AG04449 (cell line): ENCODE measurements at regions of chr11 and their contacts with region 1.

Region 1: DNA sequence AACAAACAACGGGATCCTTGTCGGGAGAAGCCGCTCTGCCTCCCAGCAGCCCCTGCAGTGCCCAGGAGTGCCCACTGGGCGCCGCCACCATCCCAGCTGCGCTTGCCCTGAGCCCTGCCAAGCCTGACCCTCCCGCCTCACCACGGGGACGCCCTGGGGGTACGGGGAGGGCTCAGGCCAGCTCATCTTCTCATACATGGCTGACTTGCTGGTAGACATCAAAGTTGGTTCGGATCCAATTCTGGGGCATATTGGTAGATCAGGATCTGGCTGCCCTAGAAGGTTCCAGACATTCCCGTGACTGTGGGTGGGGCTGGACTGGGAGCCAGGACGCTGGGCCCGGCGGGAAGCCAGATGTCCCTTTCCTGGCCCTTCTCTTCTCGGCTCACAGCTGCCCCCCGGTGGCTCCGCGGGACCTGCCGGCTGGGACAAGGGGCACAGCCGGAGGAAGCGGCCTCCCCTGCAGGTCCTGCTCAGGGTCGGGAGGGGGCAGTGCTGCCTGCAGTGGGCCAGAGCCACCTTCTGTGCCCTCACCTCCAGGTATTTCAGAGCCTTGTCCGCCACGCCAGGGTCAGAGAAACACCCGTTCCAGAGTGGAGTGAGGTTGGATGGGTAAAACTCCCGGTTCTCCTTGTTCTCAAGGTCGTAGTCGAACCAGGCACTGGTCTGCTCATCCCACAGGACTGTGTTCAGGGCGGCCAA is 10.6 kb upstream of the TREH start:
- DNase-seq: peak; percentile 38
- H3K4me3 ChIP-seq: peak overlapping the region; percentile 47
- CTCF ChIP-seq: peak; percentile 99

Region 2: GRCh38 chr11:118672846-118673245 is 17.2 kb before region 1 on chr11:
- CTCF ChIA-PET with region 1: interaction called, 47 read pairs
- POLR2A ChIA-PET with region 1: no interaction called
- DNase-seq: no peak
- H3K4me3 ChIP-seq: no peak overlapping the region
- CTCF ChIP-seq: no peak

Region 3: DNA sequence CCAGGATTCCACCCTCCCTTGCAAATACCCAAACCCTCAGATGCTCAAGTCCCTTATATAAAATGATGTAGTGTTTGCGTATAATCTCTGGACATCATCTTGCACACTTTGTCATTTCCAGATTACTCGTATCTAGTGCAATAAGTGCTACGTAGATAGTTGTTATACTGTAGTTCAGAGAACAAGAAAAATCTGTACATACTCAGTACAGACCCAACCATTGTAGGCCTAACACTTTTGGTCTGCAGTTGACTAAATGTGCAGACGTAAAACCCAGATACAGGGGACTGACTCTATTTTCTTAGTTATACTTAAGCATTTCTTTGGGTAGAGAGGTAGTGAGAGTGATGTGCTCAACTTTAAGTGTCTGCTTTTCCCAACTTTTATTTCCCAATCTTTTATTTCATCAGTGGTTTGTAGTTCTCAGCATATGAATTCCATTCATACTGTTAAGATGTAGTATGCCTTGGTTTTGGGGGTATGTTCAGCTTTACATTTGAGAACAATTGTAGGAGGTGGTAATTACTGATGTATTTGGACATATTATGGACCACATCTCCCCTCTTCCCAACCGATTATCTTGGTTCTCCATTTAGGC is 57.1 kb after region 1 on chr11:
- CTCF ChIA-PET with region 1: interaction called, 10 read pairs
- POLR2A ChIA-PET with region 1: no interaction called
- DNase-seq: no peak
- H3K4me3 ChIP-seq: no peak overlapping the region
- CTCF ChIP-seq: no peak

Region 4: GRCh38 chr11:118907051-118908042 is 217.3 kb after region 1 on chr11:
- CTCF ChIA-PET with region 1: interaction called, 12 read pairs
- POLR2A ChIA-PET with region 1: interaction called, 3 read pairs
- DNase-seq: no peak
- H3K4me3 ChIP-seq: peak overlapping the region; percentile 46
- CTCF ChIP-seq: peak; percentile 89

Region 5: DNA sequence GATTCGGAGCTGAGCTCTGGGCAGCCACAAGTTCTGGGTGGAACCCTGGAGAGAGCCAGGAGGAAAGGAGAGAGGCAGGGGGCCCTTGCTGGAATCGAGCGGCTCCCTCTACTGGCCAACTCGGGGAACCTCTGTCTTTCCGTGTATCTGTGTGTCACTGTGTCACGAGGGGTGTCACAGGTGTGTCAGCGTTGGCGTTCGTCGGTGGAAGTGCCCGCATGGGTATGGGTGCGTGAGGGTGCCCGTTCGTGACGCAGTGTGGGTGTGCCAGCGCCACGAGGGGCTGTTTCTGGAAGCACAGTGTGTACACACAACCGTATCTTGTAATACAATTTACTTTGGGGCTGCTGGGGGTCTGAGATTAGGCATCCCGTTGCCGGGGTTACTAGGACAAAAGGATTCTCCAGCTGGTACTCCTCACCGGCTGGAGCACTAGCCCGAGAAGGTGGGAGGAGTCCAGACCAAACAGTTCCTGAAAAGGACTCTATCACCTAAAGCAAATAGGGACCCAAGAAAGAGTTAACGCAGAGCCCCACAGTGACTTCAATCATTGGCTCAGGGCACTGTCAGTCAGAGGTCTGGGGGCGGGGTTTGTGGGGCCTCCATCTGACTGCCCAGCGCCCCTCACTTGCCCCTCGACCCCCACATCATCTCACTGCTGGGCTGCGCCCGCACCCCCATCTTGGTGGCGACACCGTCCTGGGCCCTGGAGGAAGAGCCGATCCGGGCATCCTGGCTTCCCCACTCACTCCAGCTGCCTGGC is 238.3 kb after region 1 on chr11:
- CTCF ChIA-PET with region 1: no interaction called
- POLR2A ChIA-PET with region 1: no interaction called
- DNase-seq: no peak
- H3K4me3 ChIP-seq: peak overlapping the region; percentile 72
- CTCF ChIP-seq: peak; percentile 89

Region 6: GRCh38 chr11:118956094-118956846 is 266.3 kb after region 1 on chr11 and contains the start of gene UPK2:
- CTCF ChIA-PET with region 1: interaction called, 250 read pairs
- POLR2A ChIA-PET with region 1: no interaction called
- DNase-seq: no peak
- H3K4me3 ChIP-seq: no peak within 1 kb of the TSS
- CTCF ChIP-seq: peak; percentile 98

Region 7: GRCh38 chr11:119210050-119210449 is 520.0 kb after region 1 on chr11:
- CTCF ChIA-PET with region 1: no interaction called
- POLR2A ChIA-PET with region 1: no interaction called
- DNase-seq: no peak
- H3K4me3 ChIP-seq: no peak overlapping the region
- CTCF ChIP-seq: no peak